ENCODE measurements at regions of chr2 and their contacts with region 1.

Region 1: GRCh38 chr2:26475832-26476501 is 2.0 kb downstream of the OTOF start:
- DNase-seq: no peak
- CTCF ChIP-seq: no peak

Region 2: DNA sequence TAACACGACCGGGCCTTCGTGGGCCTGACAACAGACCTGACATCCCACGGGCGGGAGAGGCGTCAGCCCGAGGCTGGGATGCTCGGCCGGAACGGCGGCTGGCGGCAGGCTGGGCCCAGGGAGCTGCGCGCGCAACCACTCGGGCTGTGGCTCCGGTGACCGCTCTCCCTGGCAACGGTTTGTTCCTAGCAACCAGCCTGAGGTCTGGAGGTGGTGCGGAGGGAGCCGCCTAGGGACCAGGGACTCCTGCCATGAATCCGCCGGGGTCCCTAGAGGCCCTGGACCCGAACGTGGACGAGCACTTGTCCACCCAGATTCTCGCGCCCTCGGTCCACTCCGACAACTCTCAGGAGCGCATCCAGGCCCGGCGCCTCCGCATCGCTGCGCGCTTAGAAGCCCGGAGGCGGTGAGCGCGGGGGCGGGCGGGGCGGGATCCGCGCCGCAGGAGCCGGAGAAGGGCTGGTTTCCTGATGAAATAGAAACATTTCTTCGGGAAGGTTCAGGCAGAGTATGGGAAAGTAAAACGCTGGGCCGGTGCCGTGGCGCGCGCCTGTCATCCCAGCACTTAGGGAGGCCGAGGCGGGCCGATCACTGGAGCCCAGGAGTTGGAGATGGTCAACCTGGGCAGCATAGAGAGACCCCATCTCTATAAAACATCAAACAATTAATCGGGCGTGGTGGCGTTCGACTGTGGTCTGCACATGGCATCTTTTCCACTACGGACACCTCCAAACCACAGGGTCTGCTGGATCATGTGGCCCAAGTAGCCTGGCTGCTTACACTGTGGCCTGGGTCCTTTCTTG is 74.0 kb before region 1 on chr2 and contains the start of gene DRC1:
- CTCF ChIA-PET with region 1: no interaction called
- POLR2A ChIA-PET with region 1: interaction called, 10 read pairs
- DNase-seq: peak; percentile 66
- CTCF ChIP-seq: no peak